HEK293T (cell line): ENCODE measurements at regions of chr15 and their contacts with region 1.

Region 1: DNA sequence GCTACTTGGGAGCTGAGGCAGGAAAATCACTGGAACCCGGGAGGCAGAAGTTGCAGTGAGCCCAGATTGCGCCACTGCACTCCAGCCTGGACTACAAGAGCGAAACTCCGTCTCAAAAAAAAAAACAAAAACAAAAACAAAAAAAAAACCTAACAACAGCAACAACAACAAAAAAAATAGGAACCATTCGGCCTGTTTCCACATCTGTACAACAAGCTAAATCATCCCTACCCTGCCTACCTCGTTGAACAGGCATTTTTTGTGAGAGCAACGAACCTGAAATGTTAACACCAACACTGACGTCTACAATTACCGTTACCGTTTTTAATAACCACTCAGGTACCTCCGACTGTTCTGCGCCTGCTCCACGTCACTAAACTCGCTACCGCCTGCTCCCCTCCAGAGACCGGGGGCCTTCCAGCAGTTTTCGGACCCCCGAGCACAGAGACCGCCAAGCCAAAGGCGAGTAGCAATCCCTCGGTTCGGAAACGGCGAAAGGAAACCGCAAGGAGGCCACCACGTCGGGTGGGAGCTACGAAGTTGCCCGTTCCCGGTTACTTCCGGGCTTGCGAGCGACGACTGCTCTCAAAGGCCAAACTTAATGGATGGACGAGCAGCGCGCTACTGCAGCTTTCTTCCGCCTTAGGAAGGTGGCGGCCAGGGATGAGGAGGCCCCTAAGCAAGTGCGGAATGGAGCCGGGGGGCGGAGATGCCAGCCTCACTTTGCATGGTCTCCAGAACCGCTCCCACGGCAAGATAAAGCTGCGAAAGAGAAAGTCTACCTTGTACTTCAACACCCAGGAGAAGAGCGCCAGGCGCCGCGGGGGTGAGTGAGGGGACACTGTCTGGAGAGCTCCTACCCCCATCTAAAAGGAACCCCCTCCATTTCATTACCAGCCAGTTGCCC is at the starts of genes PIGB and PIGBOS1:
- DNase-seq: peak; percentile 68

Region 2: GRCh38 chr15:55334997-55335396 is 16.2 kb after region 1 on chr15:
- CTCF ChIA-PET with region 1: no interaction called
- POLR2A ChIA-PET with region 1: interaction called, 11 read pairs
- DNase-seq: no peak

Region 3: DNA sequence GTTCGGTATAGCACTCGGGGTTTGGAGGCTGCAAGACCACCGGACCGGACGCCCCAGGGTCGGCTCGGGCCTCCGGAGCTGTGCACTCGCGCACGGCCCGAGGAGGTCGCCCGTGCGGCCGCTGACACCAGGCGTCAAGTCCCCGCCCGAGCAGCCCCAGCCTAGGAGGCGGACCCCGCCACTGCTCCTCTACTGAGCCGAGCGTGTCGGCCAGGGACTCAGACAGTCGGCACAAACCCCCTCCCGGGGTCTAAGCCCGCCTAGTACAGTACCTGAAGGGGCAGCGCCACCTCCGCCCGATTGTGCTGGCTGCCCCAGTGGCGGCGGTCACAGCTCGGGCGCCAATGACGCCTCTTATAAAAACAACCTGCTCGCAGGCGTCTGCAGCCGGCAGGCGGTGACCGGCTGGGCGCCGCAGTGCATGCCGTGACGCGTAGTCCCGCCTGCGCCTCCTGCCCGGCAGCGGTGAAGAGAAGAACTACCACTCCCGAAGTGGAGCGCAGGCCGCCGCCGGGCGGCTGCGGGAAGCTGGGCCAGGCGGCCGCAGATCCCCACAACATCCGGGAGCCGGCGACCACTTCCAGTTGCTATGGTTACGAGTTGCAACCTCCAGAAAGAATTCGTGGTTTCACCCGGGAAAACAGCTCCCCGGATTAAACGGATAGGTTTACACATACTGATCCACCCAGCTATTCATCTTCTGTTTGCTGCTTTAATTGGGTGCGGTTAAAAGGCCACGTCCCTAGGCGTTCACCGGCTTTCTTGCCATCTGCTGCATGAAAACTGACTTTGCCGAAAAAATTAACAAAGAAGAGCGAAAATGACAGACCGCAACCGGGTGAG is 89.3 kb after region 1 on chr15 and contains the starts of genes CCPG1 and PIERCE2:
- CTCF ChIA-PET with region 1: no interaction called
- POLR2A ChIA-PET with region 1: interaction called, 15 read pairs
- DNase-seq: peak; percentile 82

Region 4: DNA sequence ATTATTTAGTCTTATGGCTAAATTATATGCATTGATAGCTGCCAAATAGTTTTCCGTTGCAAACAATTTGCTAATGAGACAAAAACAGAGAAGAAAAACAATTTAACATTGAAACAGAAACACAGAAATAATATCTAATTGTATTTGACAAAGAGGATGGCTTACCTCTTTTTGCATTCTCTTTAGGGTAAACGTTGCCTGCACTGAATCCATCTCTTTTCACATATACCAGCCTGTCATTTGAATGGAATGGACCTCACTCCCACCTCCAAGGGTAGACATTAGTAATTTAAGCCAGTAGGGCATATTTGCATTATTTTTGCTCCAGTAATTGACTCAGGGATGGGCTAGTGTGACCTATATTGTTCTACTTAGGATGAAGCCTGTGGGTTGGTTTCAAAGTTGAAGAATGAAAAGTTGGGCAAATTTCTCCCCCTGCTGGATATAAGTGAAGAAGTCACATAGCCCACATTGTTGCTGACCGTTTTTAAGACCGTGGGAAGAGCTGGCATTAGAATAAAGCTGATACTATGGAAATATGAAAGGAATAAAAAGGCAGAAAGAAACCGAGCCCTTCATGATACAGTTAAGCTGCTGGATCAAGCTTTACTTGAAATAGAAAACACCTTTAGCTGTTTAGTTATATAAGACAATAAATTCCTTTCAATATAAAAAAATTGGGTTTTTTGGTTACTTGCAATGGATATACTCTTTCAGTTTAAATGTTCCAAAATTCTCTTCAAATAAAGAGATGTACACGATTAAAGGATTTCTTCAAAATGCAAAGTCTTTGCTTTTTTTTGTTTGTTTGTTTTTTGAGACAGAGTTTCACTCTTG is 116.4 kb after region 1 on chr15:
- CTCF ChIA-PET with region 1: interaction called, 14 read pairs
- POLR2A ChIA-PET with region 1: interaction called, 5 read pairs
- DNase-seq: peak; percentile 20